MCF 10A (cell line): ENCODE measurements at regions of chr12 and their contacts with region 1.

Region 1: DNA sequence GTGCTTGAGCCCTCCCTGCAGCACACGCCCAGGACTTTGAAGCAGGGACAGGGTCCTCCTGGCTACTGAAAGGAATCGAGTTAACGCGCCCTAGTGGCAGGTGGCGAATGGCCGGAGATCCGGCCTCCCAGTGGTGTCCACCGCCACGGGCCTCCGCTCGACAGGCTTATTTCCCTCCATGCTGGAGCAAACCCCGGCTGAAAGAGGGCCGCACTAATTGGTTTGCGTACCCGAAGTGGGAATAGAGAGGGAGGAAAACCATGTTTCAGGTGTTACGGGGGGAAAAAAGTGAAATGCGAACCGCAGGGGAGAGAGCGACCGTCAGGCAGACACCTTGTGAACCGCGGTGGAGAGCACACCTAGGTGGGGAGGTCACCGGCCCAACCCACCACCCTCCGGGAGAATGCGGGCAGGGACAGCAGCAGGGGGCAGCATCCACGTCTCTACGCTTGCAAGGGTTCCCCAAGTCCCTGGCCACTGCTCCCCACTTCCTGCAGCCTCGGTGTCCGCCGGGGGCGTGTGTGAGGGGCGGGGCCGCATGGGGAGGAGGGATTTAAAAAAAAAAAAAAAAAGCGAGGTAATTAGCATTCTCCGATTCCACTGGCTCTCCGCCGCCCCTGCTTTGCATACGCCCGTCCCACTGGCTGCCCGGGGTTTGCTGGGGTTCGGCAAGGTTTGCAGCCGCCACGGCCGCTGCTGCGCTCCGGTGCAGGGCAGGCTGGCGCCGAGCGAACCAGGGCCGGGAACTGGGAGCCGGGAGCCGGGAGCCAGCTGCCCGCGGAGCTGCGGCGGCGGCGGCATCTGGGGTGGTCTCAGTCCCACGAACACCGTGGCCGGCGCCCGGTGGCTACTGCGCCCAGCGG is 224.6 kb upstream of the CRY1 start:
- DNase-seq: peak; percentile 92
- H3K4me3 Mint-ChIP-seq: peak overlapping the region; percentile 77
- H3K27ac Mint-ChIP-seq: no peak overlapping the region
- H3K4me1 Mint-ChIP-seq: peaks cover 5% of the 10 kb centered on the region
- H3K27me3 Mint-ChIP-seq: peaks cover 54% of the 10 kb centered on the region
- CTCF ChIP-seq: peak; percentile 14

Region 2: DNA sequence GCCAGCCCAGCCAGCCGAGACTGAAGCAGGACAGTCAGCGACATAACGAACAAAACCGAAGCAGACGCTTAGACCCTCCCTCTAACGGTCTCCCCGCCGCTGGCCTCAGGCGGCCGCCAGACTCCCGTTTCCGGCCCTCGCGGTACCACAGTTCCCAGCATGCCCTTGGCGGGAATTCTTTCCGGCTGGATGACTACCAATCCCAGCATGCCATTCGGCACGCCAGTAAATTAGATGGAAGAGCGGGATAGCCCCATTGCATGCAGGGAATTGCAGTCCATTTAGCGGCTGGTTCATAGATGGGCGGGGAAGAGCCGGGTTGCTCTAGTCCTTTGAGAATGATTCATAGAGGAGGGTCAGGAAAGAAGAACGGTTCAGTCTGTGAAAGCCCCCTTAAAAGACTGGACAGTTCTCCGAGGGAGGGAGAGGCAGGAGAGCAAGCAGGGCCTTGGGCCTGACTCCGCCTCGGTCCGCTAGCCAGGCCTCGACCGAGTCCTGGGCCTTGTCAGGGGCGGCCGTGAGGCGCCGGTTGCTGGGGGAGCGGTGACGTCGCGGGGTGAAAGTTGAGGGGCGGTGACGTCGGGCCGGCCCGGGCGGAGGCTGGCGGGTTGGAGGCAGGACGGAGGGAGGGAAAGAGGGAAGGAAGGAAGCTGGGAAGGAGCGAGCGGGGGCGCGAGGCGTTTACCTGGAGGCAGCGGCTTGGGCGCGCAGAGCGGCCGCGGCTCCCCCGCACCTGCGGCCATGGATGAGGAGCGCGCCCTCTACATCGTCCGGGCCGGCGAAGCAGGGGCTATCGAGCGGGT is 543.8 kb before region 1 on chr12 and contains the start of gene RIC8B:
- CTCF ChIA-PET with region 1: no interaction called
- POLR2A ChIA-PET with region 1: no interaction called
- intact Hi-C with region 1: no loop called
- DNase-seq: peak; percentile 99
- H3K4me3 Mint-ChIP-seq: peak within 1 kb of the TSS; percentile 99
- H3K27ac Mint-ChIP-seq: peak within 1 kb of the TSS; percentile 98
- H3K4me1 Mint-ChIP-seq: peaks cover 17% of the 10 kb centered on the region
- H3K27me3 Mint-ChIP-seq: peaks cover 8% of the 10 kb centered on the region
- CTCF ChIP-seq: no peak
- total RNA-seq, gene RIC8B: 10.0 and 10.8 TPM in 2 replicates

Region 3: DNA sequence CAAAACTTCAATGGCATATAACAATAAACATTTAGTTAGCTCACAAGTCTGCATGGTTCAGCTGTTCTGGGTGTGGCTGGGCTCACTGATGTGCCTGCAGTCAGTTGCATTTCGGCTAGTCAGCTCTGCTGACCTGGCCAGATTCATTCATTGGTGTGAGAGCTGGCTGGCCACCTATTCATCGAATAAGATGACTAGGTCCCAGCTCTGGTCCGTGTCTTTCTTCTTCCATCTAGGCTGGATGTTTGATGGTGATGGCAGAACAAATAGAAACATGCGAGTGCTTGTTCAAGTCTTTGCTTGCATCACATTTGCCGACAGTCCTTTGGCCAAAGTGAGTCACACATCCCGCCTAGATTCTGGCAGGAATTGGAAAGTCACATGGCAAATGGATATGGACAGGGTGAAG is 21.3 kb before region 1 on chr12:
- CTCF ChIA-PET with region 1: interaction called, 4 read pairs
- POLR2A ChIA-PET with region 1: interaction called, 10 read pairs
- intact Hi-C with region 1: no loop called
- DNase-seq: peak; percentile 98
- H3K4me3 Mint-ChIP-seq: peak overlapping the region; percentile 51
- H3K27ac Mint-ChIP-seq: peak overlapping the region; percentile 37
- H3K4me1 Mint-ChIP-seq: peaks cover 26% of the 10 kb centered on the region
- H3K27me3 Mint-ChIP-seq: no peaks in the 10 kb centered on the region
- CTCF ChIP-seq: no peak